ENCODE measurements at regions of chr7 and their contacts with region 1.

Region 1: DNA sequence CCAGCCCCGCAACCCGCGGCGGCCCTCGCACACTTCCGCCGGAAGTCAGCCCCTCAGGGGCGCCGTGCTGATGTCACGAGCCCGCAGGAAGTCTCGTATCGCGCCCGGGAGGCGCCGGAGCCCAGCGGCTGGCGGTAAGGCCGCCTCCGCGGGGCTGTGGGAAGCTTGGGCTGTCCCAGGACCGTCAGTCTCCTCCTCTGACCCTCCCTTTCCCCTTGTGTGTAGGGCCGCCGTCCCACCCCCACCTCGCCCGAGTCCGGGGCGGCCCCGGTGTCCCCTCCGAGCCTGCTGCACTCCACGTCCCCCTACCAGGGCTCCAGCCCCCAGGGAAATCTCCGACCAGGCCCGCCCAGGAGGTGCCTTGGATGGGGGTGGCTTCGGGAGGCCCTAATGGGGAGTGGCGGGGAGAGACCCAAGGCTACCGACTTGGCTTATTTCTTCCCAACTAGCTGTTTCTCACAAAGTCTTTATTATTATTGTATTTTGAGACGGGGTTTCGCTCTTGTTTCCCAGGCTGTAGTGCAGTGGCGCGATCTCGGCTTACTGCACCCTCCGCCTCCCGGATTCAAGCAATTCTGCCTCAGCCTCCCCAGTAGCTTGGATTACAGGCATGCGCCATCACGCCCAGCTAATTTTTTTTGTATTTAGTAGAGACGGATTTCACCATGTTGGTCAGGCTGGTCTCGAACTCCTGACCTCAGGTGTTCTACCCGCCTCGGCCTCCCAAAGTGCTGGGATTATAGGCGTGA is at the start of gene ZDHHC4:
- DNase-seq: peak; percentile 98
- total RNA-seq, gene ZDHHC4: 34.2 to 36.9 TPM

Region 2: GRCh38 chr7:6453734-6454133 is 123.8 kb before region 1 on chr7:
- intact Hi-C with region 1: no loop called
- DNase-seq: no peak

Region 3: DNA sequence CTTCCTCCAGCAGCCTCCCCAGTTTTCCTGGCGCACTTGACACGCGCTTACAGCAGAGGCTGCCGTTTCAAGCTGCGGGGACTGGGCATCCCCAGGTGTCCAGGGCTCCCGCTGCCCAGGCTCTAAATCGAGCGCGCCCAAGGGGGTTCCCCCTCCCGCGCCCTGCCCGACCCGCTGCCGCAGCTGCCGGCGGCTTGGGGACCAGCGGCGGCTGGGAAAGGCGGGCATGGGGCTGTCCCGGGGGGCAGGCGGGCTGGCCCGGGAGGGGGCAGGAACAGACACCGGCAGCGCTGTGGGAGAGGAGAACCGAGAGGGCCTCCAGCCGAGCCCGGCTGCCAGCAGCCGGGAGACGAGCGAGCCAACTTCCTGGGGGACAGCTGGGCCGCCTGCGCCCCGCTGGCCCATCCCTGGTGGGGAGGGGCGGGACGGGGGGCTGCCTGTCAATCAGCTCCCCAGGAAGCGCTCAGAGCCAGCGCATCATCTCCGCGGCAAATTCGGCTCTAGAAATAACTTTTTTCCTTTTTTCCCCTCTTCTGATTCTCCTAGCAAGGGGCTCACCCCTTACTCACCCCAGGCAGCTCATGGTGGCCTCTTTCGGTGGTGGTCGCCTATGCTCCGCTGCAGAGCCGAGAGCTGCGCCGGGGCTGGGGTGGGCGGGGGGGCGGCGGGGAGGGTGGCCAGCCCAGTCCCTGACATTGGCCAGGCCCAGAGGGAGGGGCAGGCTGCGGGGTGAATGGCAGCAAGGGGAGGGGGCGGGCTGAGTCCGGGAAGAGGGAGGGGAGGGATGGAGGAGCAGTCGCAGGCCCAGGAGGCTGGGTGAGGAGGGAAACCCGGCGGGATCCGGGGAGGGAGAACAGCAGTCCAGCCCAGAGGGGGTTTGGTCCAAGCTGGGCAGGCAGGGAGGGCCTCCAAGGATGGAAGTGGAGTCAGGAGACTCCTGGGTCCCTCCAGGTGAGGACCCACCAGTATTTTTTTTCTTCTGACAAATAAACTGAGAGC is 41.0 kb before region 1 on chr7:
- intact Hi-C with region 1: no loop called
- DNase-seq: no peak

Region 4: DNA sequence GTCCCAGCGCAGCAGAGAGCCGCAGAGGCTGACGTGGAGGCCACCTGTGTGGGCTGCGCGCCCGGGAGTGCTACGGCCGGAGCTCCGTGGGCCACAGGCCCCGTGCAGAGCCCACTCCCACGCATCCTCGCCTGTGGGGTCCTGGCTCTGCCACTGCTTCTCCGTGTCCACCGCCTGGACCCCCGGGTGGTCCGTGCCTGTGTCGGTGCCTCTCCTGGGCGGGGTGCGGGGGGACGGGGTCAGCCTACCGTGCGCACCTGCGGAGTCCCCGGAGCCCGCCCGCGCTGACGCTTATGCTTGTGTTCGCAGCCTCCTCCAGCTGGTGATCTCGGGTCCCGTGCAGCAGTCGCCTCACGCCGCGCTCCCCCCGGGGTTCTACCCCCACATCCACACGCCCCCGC is 30.1 kb after region 1 on chr7:
- intact Hi-C with region 1: loop called in 1 of 2 experiments (anchors 1 kb)
- DNase-seq: no peak